Activated T-helper 1 cell treated with anti-CD3 and anti-CD28 coated beads, Interleukin-12 subunit alpha, Interleukin-12 subunit beta, Interleukin-2, Interleukin-4 antibody, amounts not matched to agents 30 ng/mL and 10 ng/mL and 1 ng/mL, durations not matched to agents 14 hours and 24 hours and 36 hours (primary cell): ENCODE measurements at regions of chr17 and their contacts with region 1.

Region 1: GRCh38 chr17:80866147-80866793 is 125.4 kb upstream of the CHMP6 start:
- DNase-seq: peak; percentile 62
- H3K4me3 Mint-ChIP-seq: peak overlapping the region; percentile 48
- H3K27ac Mint-ChIP-seq: peak overlapping the region; percentile 84
- H3K4me1 Mint-ChIP-seq: peaks cover 88% of the 10 kb centered on the region
- H3K27me3 Mint-ChIP-seq: no peaks in the 10 kb centered on the region

Region 2: GRCh38 chr17:80704381-80704819 is 161.9 kb before region 1 on chr17:
- intact Hi-C with region 1: no loop called
- DNase-seq: no peak
- H3K4me3 Mint-ChIP-seq: peak overlapping the region; percentile 32
- H3K27ac Mint-ChIP-seq: peak overlapping the region; percentile 46
- H3K4me1 Mint-ChIP-seq: peaks cover 82% of the 10 kb centered on the region
- H3K27me3 Mint-ChIP-seq: no peaks in the 10 kb centered on the region

Region 3: DNA sequence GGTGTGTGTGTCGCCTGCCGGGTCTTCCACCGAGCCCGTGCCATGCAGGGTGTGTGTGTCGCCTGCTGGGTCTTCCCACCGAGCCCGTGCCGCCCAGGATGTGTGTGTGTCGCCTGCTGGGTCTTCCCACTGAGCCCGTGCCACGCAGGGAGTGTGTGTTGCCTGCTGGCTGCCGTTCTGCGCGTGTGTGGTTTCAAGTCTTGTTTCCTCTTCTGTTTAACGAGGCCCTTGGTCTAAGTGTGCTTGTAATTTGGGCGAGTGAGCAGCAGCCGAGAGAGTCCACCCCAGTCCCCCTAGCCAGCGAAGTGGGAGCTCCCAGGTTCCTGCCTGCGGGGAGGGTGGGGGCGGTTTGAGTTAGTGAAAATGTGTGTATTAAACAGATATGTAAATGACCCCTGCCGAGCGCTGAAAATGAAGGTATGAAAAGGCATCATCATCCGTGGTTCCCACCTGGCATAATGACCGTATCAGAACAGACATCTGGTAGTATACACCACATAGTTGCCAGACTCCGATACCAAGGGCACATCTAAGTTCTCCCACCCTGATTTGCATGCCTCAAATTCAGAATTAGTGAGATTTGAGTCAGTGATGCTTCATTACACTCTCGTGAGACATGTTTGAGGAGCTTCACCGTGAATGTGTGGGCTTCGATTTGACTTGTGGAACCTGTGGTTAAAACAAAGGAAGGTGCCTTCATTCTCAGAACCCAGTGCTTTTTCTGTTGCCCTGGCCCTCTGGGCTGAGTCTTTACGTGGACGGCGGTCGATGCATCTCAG is 10.9 kb after region 1 on chr17:
- intact Hi-C with region 1: loop called (anchors 1 kb)
- DNase-seq: peak; percentile 64
- H3K4me3 Mint-ChIP-seq: peak overlapping the region; percentile 65
- H3K27ac Mint-ChIP-seq: peak overlapping the region; percentile 96
- H3K4me1 Mint-ChIP-seq: peaks cover 55% of the 10 kb centered on the region
- H3K27me3 Mint-ChIP-seq: no peaks in the 10 kb centered on the region

Region 4: GRCh38 chr17:80899402-80900268 is 33.4 kb after region 1 on chr17:
- intact Hi-C with region 1: loop called (anchors 1 kb)
- DNase-seq: peak; percentile 72
- H3K4me3 Mint-ChIP-seq: no peak overlapping the region
- H3K27ac Mint-ChIP-seq: peak overlapping the region; percentile 48
- H3K4me1 Mint-ChIP-seq: peaks cover 56% of the 10 kb centered on the region
- H3K27me3 Mint-ChIP-seq: no peaks in the 10 kb centered on the region

Region 5: GRCh38 chr17:80938556-80938955 is 72.3 kb after region 1 on chr17:
- intact Hi-C with region 1: loop called (anchors 2 kb)
- DNase-seq: peak; percentile 68
- H3K4me3 Mint-ChIP-seq: peak overlapping the region; percentile 60
- H3K27ac Mint-ChIP-seq: peak overlapping the region; percentile 74
- H3K4me1 Mint-ChIP-seq: peaks cover 40% of the 10 kb centered on the region
- H3K27me3 Mint-ChIP-seq: no peaks in the 10 kb centered on the region

Region 6: GRCh38 chr17:80981062-80981902 is 115.0 kb after region 1 on chr17:
- intact Hi-C with region 1: loop called (anchors 5 kb)
- DNase-seq: no peak
- H3K4me3 Mint-ChIP-seq: no peak overlapping the region
- H3K27ac Mint-ChIP-seq: no peak overlapping the region
- H3K4me1 Mint-ChIP-seq: peaks cover 11% of the 10 kb centered on the region
- H3K27me3 Mint-ChIP-seq: peaks cover 9% of the 10 kb centered on the region